B cell (primary cell): ENCODE measurements at regions of chr10 and their contacts with region 1.

Region 1: GRCh38 chr10:114544045-114544659 is 113.9 kb downstream of the ABLIM1 start:
- DNase-seq: peak; percentile 82
- ATAC-seq: peak; percentile 93
- H3K4me3 ChIP-seq: peak overlapping the region in 3 of 5 experiments; percentile 15 to 51 (median 26)
- H3K4me3 Mint-ChIP-seq: peak overlapping the region; percentile 52
- H3K27ac ChIP-seq: peak overlapping the region; percentile 77 to 86
- H3K27ac Mint-ChIP-seq: peak overlapping the region; percentile 90
- H3K4me1 ChIP-seq: peaks cover 35 to 83% of the 10 kb centered on the region in 2 donors
- H3K4me1 Mint-ChIP-seq: peaks cover 70% of the 10 kb centered on the region
- H3K27me3 ChIP-seq: no peaks in the 10 kb centered on the region
- H3K27me3 Mint-ChIP-seq: no peaks in the 10 kb centered on the region
- CTCF ChIP-seq: no peak

Region 2: GRCh38 chr10:114492351-114493037 is 51.7 kb before region 1 on chr10:
- CTCF ChIA-PET with region 1: interaction called, 4 read pairs
- POLR2A ChIA-PET with region 1: interaction called, 16 read pairs
- intact Hi-C with region 1: loop called (anchors 1 kb)
- DNase-seq: peak; percentile 19
- ATAC-seq: no peak
- H3K4me3 ChIP-seq: no peak overlapping the region
- H3K4me3 Mint-ChIP-seq: peak overlapping the region; percentile 67
- H3K27ac ChIP-seq: peak overlapping the region in 1 of 2 donors; percentile 4
- H3K27ac Mint-ChIP-seq: peak overlapping the region; percentile 71
- H3K4me1 ChIP-seq: peaks cover 38 to 47% of the 10 kb centered on the region in 2 donors
- H3K4me1 Mint-ChIP-seq: peaks cover 62% of the 10 kb centered on the region
- H3K27me3 ChIP-seq: no peaks in the 10 kb centered on the region
- H3K27me3 Mint-ChIP-seq: no peaks in the 10 kb centered on the region
- CTCF ChIP-seq: no peak

Region 3: DNA sequence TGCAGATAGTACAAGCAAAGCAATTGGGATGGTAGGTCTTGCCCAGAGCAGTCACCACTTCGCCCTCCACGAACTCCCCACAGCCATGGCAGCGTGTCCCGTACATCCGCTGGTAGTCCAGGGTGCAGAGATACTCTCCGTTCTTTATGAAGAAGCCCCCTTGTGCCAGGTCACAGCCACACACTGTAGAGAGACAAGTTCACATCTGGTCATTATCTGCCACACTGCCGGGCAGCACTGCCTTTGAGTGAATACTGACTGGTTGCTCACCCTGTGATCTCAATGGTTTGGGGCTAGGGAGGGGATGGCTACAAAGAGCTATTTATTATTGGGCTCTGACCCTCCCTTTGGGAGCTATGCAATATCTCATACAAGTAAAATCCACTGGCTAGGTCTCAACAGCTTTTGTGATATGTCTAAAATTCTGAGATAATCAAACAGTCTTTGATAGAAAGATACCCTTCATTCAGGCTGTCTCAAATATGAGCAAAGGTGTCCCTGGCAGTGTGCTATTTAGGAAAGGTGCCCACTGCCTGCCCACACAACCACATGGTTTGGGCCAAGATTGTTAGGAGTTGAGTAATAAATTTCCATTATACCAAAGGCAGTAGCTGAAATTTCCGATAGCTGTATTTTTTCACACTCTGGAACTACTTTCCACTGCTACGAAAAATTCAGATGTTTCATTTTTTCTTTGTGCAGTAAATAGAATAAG is 31.4 kb after region 1 on chr10:
- CTCF ChIA-PET with region 1: no interaction called
- POLR2A ChIA-PET with region 1: no interaction called
- intact Hi-C with region 1: no loop called
- DNase-seq: no peak
- ATAC-seq: no peak
- H3K4me3 ChIP-seq: no peak overlapping the region
- H3K4me3 Mint-ChIP-seq: no peak overlapping the region
- H3K27ac ChIP-seq: no peak overlapping the region
- H3K27ac Mint-ChIP-seq: no peak overlapping the region
- H3K4me1 ChIP-seq: no peaks in the 10 kb centered on the region
- H3K4me1 Mint-ChIP-seq: no peaks in the 10 kb centered on the region
- H3K27me3 ChIP-seq: no peaks in the 10 kb centered on the region
- H3K27me3 Mint-ChIP-seq: peaks cover 4% of the 10 kb centered on the region
- CTCF ChIP-seq: no peak

Region 4: DNA sequence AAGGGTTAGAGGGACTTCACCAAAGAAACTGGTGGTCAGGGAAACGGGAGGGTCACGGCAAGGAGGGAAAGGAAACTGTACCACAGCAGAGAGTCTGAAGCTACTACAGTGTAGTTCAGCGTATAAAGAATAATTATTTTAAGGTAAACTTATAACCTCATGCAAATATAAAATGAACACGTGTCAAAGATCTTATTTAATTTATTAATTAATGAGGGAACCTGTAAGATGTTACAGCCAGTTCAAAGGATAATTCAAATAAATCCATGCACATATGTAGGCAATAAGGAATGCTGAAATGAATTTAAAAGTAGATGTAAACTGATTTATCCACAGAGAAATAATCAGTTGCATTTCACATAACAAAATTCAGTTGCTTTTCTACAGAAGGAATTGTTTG is 499.6 kb after region 1 on chr10:
- CTCF ChIA-PET with region 1: no interaction called
- POLR2A ChIA-PET with region 1: no interaction called
- intact Hi-C with region 1: no loop called
- DNase-seq: no peak
- ATAC-seq: no peak
- H3K4me3 ChIP-seq: no peak overlapping the region
- H3K4me3 Mint-ChIP-seq: no peak overlapping the region
- H3K27ac ChIP-seq: no peak overlapping the region
- H3K27ac Mint-ChIP-seq: no peak overlapping the region
- H3K4me1 ChIP-seq: no peaks in the 10 kb centered on the region
- H3K4me1 Mint-ChIP-seq: no peaks in the 10 kb centered on the region
- H3K27me3 ChIP-seq: no peaks in the 10 kb centered on the region
- H3K27me3 Mint-ChIP-seq: peaks cover 8% of the 10 kb centered on the region
- CTCF ChIP-seq: no peak